Activated CD4-positive, alpha-beta memory T cell treated with anti-CD3 and anti-CD28 coated beads, Interleukin-2, amount 10 ng/mL, durations not matched to agents 7 days and 5 days (primary cell): ENCODE measurements at regions of chr6 and their contacts with region 1.

Region 1: DNA sequence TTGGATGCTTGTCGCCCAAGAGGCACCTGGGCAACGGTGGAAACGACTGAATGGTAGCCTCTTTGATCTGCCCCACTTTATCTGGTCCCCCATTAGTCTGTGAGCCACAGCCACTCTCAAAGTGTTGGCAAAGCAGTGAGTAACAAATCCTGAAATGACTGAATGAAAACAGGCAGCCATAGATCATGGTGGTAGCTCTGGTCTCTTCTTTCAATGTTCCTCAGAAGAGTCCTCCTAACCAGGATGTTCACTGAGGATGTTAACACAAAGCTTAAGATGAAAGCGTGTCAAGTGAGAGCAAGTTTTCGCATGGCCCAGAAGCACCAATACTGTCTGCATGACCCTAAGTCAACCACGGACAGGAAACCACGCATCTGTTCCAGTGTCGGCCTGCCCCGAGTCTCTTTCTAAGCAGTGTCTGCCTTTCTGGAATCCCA is 107.3 kb downstream of the IRF4 start:
- DNase-seq: peak; percentile 72
- H3K4me3 Mint-ChIP-seq: peak overlapping the region; percentile 65
- H3K27ac Mint-ChIP-seq: peak overlapping the region; percentile 88
- H3K4me1 Mint-ChIP-seq: peaks cover 80% of the 10 kb centered on the region
- H3K27me3 Mint-ChIP-seq: no peaks in the 10 kb centered on the region

Region 2: DNA sequence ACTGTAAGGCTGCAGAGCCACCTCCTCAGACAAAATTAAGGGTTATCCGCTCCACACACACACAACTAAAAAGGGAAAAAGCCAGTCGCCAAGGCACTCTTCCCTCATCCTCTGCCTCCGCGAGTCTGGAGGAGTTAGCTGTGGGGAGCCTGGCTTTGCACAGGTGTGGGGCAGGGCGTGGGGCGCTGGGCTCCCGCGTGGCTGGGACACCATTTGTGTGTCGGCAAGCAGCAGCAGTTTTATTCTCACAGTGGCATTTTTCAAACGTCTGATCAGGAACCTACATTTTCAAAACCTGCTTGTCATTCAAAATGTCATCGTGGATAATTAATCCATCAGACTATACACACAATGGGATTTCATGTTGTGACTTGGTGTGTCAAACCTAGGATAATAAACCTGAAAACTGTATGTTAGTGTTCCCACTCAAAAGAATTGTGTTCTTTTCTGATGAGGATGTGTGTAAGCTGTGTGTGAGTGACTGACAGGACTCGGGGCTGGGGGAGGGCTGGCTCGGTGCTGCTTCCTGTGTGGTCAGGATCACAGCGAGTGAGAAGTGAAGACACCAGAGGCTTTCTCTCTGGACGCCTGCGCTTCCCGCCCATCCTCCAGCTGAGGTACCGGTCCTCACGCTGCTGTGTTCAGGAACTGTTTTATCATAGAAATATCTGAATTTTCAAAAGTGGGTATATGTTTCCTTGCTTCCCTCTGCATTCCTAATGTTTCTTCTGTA is 24.2 kb before region 1 on chr6:
- CTCF ChIA-PET with region 1: interaction called, 6 read pairs
- POLR2A ChIA-PET with region 1: interaction called, 10 read pairs
- DNase-seq: peak; percentile 87
- H3K4me3 Mint-ChIP-seq: peak overlapping the region; percentile 46
- H3K27ac Mint-ChIP-seq: peak overlapping the region; percentile 42
- H3K4me1 Mint-ChIP-seq: peaks cover 60% of the 10 kb centered on the region
- H3K27me3 Mint-ChIP-seq: peaks cover 43% of the 10 kb centered on the region

Region 3: GRCh38 chr6:484086-484745 is 14.6 kb before region 1 on chr6:
- CTCF ChIA-PET with region 1: interaction called, 7 read pairs
- POLR2A ChIA-PET with region 1: interaction called, 32 read pairs
- DNase-seq: no peak
- H3K4me3 Mint-ChIP-seq: no peak overlapping the region
- H3K27ac Mint-ChIP-seq: peak overlapping the region; percentile 55
- H3K4me1 Mint-ChIP-seq: peaks cover 43% of the 10 kb centered on the region
- H3K27me3 Mint-ChIP-seq: peaks cover 6% of the 10 kb centered on the region